Activated naive CD4-positive, alpha-beta T cell treated with anti-CD3 and anti-CD28 coated beads for 36 hours (primary cell): ENCODE measurements at regions of chr5 and their contacts with region 1.

Region 1: GRCh38 chr5:172770675-172771438 is at the start of gene DUSP1:
- DNase-seq: peak; percentile 96
- H3K4me3 Mint-ChIP-seq: peak within 1 kb of the TSS; percentile 90
- H3K27ac Mint-ChIP-seq: peak within 1 kb of the TSS; percentile 93
- H3K4me1 Mint-ChIP-seq: peaks cover 66% of the 10 kb centered on the region
- H3K27me3 Mint-ChIP-seq: no peaks in the 10 kb centered on the region
- total RNA-seq, gene DUSP1: 7.0 to 7.3 TPM

Region 2: DNA sequence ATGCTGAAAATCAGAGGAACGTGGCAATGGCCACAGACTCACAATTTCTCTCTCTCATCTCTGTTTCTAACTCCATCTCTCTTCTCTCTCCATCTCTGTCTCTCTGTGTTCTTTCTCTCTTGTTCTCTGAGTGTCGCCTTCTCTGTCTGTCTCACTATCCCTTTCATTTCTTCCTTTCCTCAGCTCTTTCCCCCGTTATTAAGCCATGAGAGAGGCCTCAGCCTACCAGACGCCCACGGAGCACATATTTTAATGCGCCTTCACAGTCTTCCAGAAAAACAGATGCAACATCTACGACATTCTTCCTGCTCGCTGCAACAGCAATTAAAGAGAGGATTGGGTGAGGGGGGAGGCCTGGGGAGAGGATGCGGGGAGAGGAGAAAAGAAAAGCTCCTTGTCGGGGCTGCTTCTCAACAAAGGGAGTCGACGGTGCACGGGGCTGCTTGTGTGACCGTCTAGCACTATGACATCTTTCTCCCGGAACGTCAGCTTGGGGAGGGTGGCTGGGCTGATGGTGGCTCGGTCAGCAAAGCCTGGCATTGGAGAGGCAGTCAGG is 167.5 kb before region 1 on chr5:
- CTCF ChIA-PET with region 1: no interaction called
- intact Hi-C with region 1: no loop called
- DNase-seq: no peak
- H3K4me3 Mint-ChIP-seq: no peak overlapping the region
- H3K27ac Mint-ChIP-seq: no peak overlapping the region
- H3K4me1 Mint-ChIP-seq: no peaks in the 10 kb centered on the region
- H3K27me3 Mint-ChIP-seq: peaks cover 9% of the 10 kb centered on the region

Region 3: DNA sequence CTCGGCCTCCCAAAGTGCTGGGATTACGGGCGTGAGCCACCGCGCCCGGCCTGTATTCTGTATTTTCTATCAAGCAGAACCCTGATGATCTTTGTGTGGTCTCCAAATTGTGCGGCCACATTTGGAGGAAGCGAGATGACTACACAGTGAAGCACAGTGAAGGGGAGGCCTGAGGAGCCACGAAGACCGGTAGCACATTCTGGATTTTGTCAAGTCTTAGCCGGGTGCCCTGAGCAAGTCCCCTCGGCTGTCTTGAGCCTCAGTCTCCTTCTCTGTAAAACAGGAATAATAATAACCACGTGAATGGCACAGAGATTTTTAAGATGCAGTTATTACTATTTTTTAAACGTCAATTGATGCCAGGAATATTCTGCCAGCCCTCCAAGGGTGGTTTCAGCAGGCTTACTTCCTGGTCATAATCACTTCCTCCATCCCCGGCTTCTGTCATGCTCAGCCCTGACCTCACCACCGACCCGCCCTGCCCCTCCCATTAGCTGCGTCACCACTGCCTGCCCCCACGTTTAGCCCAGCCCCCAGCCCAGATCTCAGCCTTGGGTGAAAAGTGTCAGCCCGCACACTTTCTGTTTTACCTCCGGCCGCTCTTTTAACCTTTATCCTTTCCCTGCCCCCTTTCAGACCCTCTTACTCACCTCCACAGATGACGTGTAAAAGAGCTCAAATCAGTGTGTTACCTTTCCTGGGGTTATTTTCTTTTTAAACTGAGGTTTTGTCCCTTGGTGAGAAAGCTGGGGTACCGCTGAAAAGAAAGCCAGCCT is 36.2 kb after region 1 on chr5:
- CTCF ChIA-PET with region 1: interaction called, 5 read pairs
- intact Hi-C with region 1: loop called (anchors 1 kb)
- DNase-seq: peak; percentile 98
- H3K4me3 Mint-ChIP-seq: peak overlapping the region; percentile 43
- H3K27ac Mint-ChIP-seq: peak overlapping the region; percentile 86
- H3K4me1 Mint-ChIP-seq: peaks cover 14% of the 10 kb centered on the region
- H3K27me3 Mint-ChIP-seq: no peaks in the 10 kb centered on the region

Region 4: GRCh38 chr5:172910828-172911627 is 140.2 kb after region 1 on chr5:
- CTCF ChIA-PET with region 1: no interaction called
- intact Hi-C with region 1: loop called (anchors 1 kb)
- DNase-seq: peak; percentile 63
- H3K4me3 Mint-ChIP-seq: no peak overlapping the region
- H3K27ac Mint-ChIP-seq: no peak overlapping the region
- H3K4me1 Mint-ChIP-seq: no peaks in the 10 kb centered on the region
- H3K27me3 Mint-ChIP-seq: no peaks in the 10 kb centered on the region

Region 5: GRCh38 chr5:172958331-172959046 is 187.6 kb after region 1 on chr5:
- CTCF ChIA-PET with region 1: no interaction called
- intact Hi-C with region 1: loop called (anchors 1 kb)
- DNase-seq: peak; percentile 60
- H3K4me3 Mint-ChIP-seq: peak overlapping the region; percentile 93
- H3K27ac Mint-ChIP-seq: peak overlapping the region; percentile 86
- H3K4me1 Mint-ChIP-seq: peaks cover 16% of the 10 kb centered on the region
- H3K27me3 Mint-ChIP-seq: no peaks in the 10 kb centered on the region

Region 6: GRCh38 chr5:173057062-173057924 is 286.4 kb after region 1 on chr5:
- CTCF ChIA-PET with region 1: no interaction called
- intact Hi-C with region 1: loop called (anchors 1 kb)
- DNase-seq: peak; percentile 100
- H3K4me3 Mint-ChIP-seq: peak overlapping the region; percentile 91
- H3K27ac Mint-ChIP-seq: peak overlapping the region; percentile 97
- H3K4me1 Mint-ChIP-seq: peaks cover 51% of the 10 kb centered on the region
- H3K27me3 Mint-ChIP-seq: no peaks in the 10 kb centered on the region